Ovary (tissue), 10 donors: ENCODE measurements at regions of chr2 and their contacts with region 1.

Region 1: GRCh38 chr2:64873472-64873924 is 115.7 kb upstream of the SLC1A4 start:
- DNase-seq: peak; percentile 67 to 86 (median 81)
- H3K4me3 ChIP-seq: no peak overlapping the region
- H3K27ac ChIP-seq: no peak overlapping the region
- H3K4me1 ChIP-seq: peaks cover 1% of the 10 kb centered on the region
- H3K27me3 ChIP-seq: no peaks in the 10 kb centered on the region
- CTCF ChIP-seq: peak; percentile 90 to 93 (median 92)
- EP300 ChIP-seq: no peak
- POLR2A ChIP-seq: peak; percentile 16

Region 2: GRCh38 chr2:64330281-64331113 is 543.0 kb before region 1 on chr2:
- intact Hi-C with region 1: loop called in 1 of 4 experiments (anchors 5 kb)
- DNase-seq: peak; percentile 82 to 89 (median 83)
- H3K4me3 ChIP-seq: peak overlapping the region; percentile 7
- H3K27ac ChIP-seq: peak overlapping the region; percentile 4 to 70
- H3K4me1 ChIP-seq: peaks cover 6% of the 10 kb centered on the region
- H3K27me3 ChIP-seq: no peaks in the 10 kb centered on the region
- CTCF ChIP-seq: peak; percentile 79 to 89 (median 88)
- EP300 ChIP-seq: no peak
- POLR2A ChIP-seq: no peak

Region 3: DNA sequence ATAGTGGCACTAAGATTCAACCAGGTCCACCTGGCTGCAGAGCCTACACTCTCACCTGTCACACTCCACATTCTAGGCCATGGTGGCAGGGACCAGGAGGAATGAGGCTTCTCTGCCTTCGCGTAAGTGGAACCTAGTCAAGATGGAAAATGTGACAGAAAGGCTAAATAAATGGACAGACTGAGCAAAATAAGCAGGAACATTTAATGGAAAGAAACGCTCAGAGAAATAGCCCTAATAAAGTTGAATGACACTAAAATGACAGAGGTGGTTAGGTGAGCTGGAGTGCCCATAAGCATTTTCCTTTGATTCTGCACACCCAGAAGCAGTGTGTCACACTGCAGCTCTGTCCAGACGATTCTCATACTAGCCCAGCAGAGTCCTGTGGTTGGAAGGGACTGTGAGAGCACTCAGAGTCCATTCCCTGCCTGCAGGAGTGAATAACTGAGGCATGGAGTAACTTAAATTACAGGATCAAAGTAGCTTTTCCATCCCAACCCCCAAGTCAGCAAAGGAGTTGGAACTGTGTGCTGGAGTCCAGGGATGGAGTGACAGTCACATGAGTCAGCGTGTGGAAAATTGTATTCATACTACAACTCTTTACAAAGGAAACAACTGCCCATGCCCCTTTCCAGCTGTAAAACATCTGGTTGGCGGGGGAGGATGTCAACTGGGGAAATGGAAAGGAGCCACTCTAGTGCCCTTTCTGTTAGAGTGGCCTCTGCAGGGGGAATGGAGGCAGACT is 524.9 kb before region 1 on chr2:
- intact Hi-C with region 1: loop called in 1 of 4 experiments (anchors 10 kb)
- DNase-seq: no peak
- H3K4me3 ChIP-seq: no peak overlapping the region
- H3K27ac ChIP-seq: no peak overlapping the region
- H3K4me1 ChIP-seq: no peaks in the 10 kb centered on the region
- H3K27me3 ChIP-seq: no peaks in the 10 kb centered on the region
- CTCF ChIP-seq: no peak
- EP300 ChIP-seq: no peak
- POLR2A ChIP-seq: no peak

Region 4: GRCh38 chr2:64523666-64524603 is 349.6 kb before region 1 on chr2 and contains the start of gene AFTPH:
- intact Hi-C with region 1: loop called in 2 of 4 experiments (anchors 5 to 10 kb)
- DNase-seq: peak; percentile 99
- H3K4me3 ChIP-seq: peak within 1 kb of the TSS; percentile 97
- H3K27ac ChIP-seq: peak within 1 kb of the TSS; percentile 78 to 97
- H3K4me1 ChIP-seq: no peaks in the 10 kb centered on the region
- H3K27me3 ChIP-seq: no peaks in the 10 kb centered on the region
- CTCF ChIP-seq: no peak
- EP300 ChIP-seq: no peak
- POLR2A ChIP-seq: peak; percentile 89
- total RNA-seq, gene AFTPH: 24.1 to 33.8 (median 27.6) TPM

Region 5: GRCh38 chr2:64594226-64594989 is 279.1 kb before region 1 on chr2:
- intact Hi-C with region 1: loop called in 2 of 4 experiments (anchors 5 kb)
- DNase-seq: no peak
- H3K4me3 ChIP-seq: no peak overlapping the region
- H3K27ac ChIP-seq: no peak overlapping the region
- H3K4me1 ChIP-seq: no peaks in the 10 kb centered on the region
- H3K27me3 ChIP-seq: no peaks in the 10 kb centered on the region
- CTCF ChIP-seq: no peak
- EP300 ChIP-seq: no peak
- POLR2A ChIP-seq: no peak

Region 6: DNA sequence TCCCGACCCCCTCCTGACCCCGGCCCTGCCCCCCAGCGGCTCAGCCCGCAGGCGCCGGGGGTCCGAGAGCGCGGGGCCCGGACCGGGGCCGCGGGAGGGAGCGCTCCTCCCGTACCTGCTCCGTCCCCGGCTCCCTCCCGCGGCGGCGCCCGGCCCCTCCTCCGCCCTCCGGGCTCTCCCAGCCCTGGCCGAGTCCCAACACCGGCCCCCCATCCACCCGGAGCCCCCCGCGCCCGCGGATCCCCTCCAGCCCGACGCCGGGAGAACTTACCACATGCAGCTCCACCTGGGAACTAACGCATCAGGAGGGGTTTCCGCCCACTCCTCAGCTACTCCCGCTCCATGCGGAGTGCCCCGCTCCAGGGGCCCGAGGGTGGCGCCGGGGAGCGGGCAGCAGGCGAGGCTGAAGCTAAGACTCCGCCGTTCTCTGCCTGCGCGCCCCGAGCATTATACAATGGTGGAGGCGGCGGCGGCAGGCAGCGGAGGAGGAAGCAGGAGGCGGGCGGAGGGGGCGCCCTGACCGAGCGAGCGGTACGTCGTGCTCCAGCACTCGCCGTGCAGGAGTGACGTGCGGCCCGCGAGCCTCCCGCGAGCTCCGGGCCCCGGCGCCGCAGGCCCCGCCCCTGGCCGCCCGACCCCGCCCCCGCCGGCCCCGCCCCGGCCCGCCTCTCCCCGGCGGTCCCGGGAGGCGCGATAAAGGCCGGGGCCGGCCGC is 220.0 kb before region 1 on chr2 and contains the start of gene SERTAD2:
- intact Hi-C with region 1: loop called in 2 of 4 experiments (anchors 1 to 5 kb)
- DNase-seq: peak; percentile 87 to 93 (median 91)
- H3K4me3 ChIP-seq: peak within 1 kb of the TSS; percentile 85
- H3K27ac ChIP-seq: peak within 1 kb of the TSS; percentile 94 to 98
- H3K4me1 ChIP-seq: peaks cover 9% of the 10 kb centered on the region
- H3K27me3 ChIP-seq: no peaks in the 10 kb centered on the region
- CTCF ChIP-seq: no peak
- EP300 ChIP-seq: no peak
- POLR2A ChIP-seq: peak; percentile 72
- total RNA-seq, gene SERTAD2: 11.0 to 26.8 (median 21.8) TPM

Region 7: GRCh38 chr2:64737547-64737946 is 136.0 kb before region 1 on chr2:
- intact Hi-C with region 1: no loop called
- DNase-seq: no peak
- H3K4me3 ChIP-seq: no peak overlapping the region
- H3K27ac ChIP-seq: no peak overlapping the region
- H3K4me1 ChIP-seq: no peaks in the 10 kb centered on the region
- H3K27me3 ChIP-seq: no peaks in the 10 kb centered on the region
- CTCF ChIP-seq: no peak
- EP300 ChIP-seq: no peak
- POLR2A ChIP-seq: no peak